Heart left ventricle (tissue), 16 donors: ENCODE measurements at regions of chr11 and their contacts with region 1.

Region 1: GRCh38 chr11:127493330-127494022 is 492.9 kb upstream of the KIRREL3 start:
- DNase-seq: no peak
- ATAC-seq: no peak
- H3K4me3 ChIP-seq: no peak overlapping the region
- H3K27ac ChIP-seq: no peak overlapping the region
- H3K4me1 ChIP-seq: no peaks in the 10 kb centered on the region
- H3K27me3 ChIP-seq: no peaks in the 10 kb centered on the region
- CTCF ChIP-seq: peak in 10 of 12 donors; percentile 8 to 43 (median 25)
- POLR2A ChIP-seq: no peak

Region 2: GRCh38 chr11:127574478-127574877 is 81.0 kb after region 1 on chr11:
- intact Hi-C with region 1: no loop called
- DNase-seq: no peak
- ATAC-seq: no peak
- H3K4me3 ChIP-seq: no peak overlapping the region
- H3K27ac ChIP-seq: no peak overlapping the region
- H3K4me1 ChIP-seq: no peaks in the 10 kb centered on the region
- H3K27me3 ChIP-seq: no peaks in the 10 kb centered on the region
- CTCF ChIP-seq: no peak
- POLR2A ChIP-seq: no peak

Region 3: DNA sequence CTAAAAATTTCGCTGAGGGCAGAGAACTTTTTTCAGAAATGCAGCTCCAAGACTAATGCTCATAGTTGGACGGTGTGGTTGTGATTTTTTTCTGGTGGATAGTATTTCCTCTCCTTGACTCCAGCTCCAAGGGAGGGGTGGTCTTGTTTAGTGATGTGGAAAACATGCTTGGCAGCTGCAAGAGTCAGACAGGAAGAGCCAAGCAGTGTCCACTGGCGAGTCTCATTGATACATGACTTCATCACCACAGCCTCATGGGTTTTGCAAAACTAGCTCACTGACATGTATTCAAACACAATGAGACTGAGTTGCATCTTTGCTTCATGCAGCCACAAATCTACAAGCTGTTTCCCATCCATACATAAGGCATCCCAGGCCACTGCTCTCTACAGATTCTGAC is 1381.0 kb after region 1 on chr11:
- intact Hi-C with region 1: loop called in 1 of 10 experiments (anchors 10 kb)
- DNase-seq: no peak
- ATAC-seq: no peak
- H3K4me3 ChIP-seq: no peak overlapping the region
- H3K27ac ChIP-seq: no peak overlapping the region
- H3K4me1 ChIP-seq: no peaks in the 10 kb centered on the region
- H3K27me3 ChIP-seq: peaks cover 0 to 6% (median 0%) of the 10 kb centered on the region in 9 donors
- CTCF ChIP-seq: no peak
- POLR2A ChIP-seq: no peak